Endothelial cell of umbilical vein (primary cell): ENCODE measurements at regions of chr5 and their contacts with region 1.

Region 1: DNA sequence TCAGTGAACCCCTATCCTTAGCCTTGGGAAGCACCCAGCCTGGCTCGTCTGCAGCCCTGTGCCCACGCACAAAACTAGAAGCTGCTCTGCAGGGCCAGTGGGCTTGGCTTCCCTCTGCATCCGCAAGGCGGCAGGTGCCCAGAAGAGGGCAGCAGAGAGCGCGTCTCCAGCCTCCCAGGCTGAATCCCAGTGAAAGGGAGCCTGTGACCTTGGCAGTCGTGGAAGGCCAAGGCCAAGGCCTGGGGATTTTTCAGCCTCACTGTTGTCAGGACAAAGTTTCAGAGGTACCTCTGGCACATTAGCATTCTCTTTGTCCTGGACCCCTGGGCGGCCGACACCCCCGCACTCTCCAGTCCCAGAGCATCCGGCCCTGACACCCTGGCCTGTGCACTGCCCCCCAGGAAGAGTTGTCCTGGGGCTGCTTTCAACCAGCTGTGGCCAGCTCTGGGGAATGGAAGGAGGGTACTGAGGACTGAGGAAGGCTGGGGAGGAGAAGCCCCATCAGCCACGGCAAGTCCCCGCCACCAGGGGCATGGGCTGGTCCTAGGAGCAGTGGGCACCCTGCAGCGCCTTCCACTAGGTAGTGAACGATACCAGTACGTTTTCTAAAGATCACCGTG is 63.6 kb upstream of the IL17B start:
- DNase-seq: peak; percentile 83
- H3K4me3 ChIP-seq: no peak overlapping the region
- H3K27ac ChIP-seq: no peak overlapping the region
- H3K4me1 ChIP-seq: peaks cover 27% of the 10 kb centered on the region
- H3K27me3 ChIP-seq: no peaks in the 10 kb centered on the region
- CTCF ChIP-seq: peak; percentile 93 to 94
- POLR2A ChIP-seq: no peak

Region 2: DNA sequence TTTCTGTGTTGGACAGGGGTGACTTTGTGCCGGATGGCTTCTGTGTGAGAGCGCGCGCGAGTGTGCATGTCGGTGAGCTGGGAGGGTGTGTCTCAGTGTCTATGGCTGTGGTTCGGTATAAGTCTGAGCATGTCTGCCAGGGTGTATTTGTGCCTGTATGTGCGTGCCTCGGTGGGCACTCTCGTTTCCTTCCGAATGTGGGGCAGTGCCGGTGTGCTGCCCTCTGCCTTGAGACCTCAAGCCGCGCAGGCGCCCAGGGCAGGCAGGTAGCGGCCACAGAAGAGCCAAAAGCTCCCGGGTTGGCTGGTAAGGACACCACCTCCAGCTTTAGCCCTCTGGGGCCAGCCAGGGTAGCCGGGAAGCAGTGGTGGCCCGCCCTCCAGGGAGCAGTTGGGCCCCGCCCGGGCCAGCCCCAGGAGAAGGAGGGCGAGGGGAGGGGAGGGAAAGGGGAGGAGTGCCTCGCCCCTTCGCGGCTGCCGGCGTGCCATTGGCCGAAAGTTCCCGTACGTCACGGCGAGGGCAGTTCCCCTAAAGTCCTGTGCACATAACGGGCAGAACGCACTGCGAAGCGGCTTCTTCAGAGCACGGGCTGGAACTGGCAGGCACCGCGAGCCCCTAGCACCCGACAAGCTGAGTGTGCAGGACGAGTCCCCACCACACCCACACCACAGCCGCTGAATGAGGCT is 616.5 kb before region 1 on chr5 and contains the start of gene ADRB2:
- CTCF ChIA-PET with region 1: no interaction called
- POLR2A ChIA-PET with region 1: no interaction called
- dilution Hi-C with region 1: no loop called
- intact Hi-C with region 1: no loop called
- DNase-seq: peak; percentile 94
- H3K4me3 ChIP-seq: peak within 1 kb of the TSS; percentile 15 to 62 (median 49)
- H3K27ac ChIP-seq: peak within 1 kb of the TSS; percentile 42
- H3K4me1 ChIP-seq: peaks cover 34% of the 10 kb centered on the region
- H3K27me3 ChIP-seq: no peaks in the 10 kb centered on the region
- CTCF ChIP-seq: no peak
- POLR2A ChIP-seq: peak; percentile 94
- total RNA-seq, gene ADRB2: 0.60 and 0.86 TPM in 2 replicates

Region 3: GRCh38 chr5:149485655-149486425 is 43.2 kb after region 1 on chr5:
- CTCF ChIA-PET with region 1: interaction called, 10 read pairs
- POLR2A ChIA-PET with region 1: no interaction called
- dilution Hi-C with region 1: no loop called
- intact Hi-C with region 1: loop called (anchors 2 kb)
- DNase-seq: peak; percentile 98
- H3K4me3 ChIP-seq: no peak overlapping the region
- H3K27ac ChIP-seq: peak overlapping the region; percentile 75
- H3K4me1 ChIP-seq: peaks cover 22% of the 10 kb centered on the region
- H3K27me3 ChIP-seq: no peaks in the 10 kb centered on the region
- CTCF ChIP-seq: no peak
- POLR2A ChIP-seq: peak; percentile 1

Region 4: DNA sequence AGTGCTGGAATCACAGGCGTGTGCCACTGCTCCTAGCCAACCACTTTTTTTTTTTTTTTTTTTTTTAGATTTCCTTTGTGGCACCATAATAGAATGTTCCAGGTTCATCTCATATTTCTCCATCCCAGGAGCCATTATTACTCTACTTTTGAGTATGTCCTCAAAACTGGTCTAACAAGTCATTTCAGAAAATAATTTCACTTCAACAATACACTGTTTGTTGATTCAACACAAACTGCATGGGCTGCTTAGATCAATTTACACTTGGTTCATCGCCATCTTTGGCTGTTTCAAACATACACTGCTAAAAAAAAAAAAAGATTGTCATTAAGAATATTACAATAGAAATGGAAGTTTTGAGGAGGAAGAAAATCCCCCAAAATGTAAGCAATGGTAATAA is 50.6 kb after region 1 on chr5:
- CTCF ChIA-PET with region 1: interaction called, 10 read pairs
- POLR2A ChIA-PET with region 1: interaction called, 6 read pairs
- dilution Hi-C with region 1: no loop called
- intact Hi-C with region 1: no loop called
- DNase-seq: no peak
- H3K4me3 ChIP-seq: no peak overlapping the region
- H3K27ac ChIP-seq: no peak overlapping the region
- H3K4me1 ChIP-seq: no peaks in the 10 kb centered on the region
- H3K27me3 ChIP-seq: no peaks in the 10 kb centered on the region
- CTCF ChIP-seq: no peak
- POLR2A ChIP-seq: no peak

Region 5: DNA sequence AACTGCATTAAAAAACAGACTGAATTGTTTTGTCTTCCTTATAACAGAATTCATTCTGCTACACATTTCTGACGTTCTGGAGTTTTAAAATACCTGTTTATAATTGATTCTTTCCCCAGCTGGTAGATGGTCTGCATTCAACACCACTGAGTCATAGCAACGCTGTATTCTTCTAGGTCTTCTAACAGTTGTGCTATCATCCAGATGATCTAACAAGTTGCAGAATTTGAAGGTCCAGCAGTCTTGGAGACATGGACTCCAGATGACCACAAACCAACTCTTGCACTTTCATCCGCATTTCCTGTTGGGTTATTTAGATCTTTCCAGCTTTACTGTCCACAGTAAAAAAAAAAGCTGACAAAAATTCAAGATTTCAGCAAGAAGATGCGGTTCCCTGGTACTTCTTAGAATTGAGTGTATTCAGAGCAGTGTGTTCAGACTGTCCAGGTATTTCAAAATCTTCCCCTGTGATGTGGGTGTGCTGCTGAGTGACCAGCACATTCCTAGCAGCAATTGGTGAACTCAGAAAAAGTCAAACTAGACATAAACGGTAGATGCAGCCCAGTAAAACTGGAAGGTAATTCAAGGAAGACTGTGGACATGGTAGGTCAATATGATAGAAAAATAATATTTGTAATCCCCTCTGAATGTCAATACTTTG is 58.4 kb after region 1 on chr5:
- CTCF ChIA-PET with region 1: interaction called, 24 read pairs
- POLR2A ChIA-PET with region 1: interaction called, 6 read pairs
- dilution Hi-C with region 1: no loop called
- intact Hi-C with region 1: no loop called
- DNase-seq: no peak
- H3K4me3 ChIP-seq: no peak overlapping the region
- H3K27ac ChIP-seq: no peak overlapping the region
- H3K4me1 ChIP-seq: no peaks in the 10 kb centered on the region
- H3K27me3 ChIP-seq: no peaks in the 10 kb centered on the region
- CTCF ChIP-seq: no peak
- POLR2A ChIP-seq: no peak

Region 6: DNA sequence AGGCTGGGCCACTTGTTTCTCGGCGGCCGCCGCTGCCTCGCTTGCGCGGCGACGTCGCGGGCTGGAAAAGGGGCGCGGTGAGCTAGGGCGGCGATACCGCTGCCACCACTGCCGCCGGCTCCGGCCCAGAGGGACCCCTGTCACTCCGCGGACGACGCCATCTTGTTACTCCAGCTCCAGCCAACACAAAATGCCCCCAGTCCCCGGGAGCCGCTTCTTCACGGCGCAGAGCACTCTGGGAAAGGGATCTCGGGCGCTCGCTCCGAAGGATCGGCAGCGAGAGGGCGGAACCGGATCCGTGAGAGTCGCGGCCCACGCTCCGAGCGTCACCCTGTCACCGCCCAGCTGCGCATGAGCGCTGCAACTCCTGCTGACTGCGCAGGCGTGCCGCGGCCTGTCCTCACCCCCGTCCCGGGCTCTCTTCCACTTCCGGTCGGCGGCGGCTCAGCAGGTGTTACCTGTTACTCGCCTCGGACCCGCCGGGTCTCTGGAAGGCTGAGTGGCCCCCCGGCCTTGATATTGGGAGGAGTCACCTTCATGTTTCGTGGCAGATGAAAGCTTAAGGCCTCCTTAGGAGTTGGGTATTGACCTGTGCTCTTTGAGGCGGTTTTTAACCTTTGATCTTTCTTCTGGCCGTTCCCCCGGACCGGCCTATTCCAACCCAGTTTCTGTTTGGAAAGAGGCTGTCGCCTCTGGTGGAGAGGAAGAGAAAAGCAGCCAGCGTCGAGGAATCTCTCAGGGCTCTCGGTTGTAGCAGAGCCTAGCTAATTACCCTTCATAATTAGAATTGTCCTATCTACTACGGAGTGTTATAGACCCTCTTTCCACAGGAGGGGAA is 108.7 kb after region 1 on chr5 and contains the start of gene CSNK1A1:
- CTCF ChIA-PET with region 1: interaction called, 27 read pairs
- POLR2A ChIA-PET with region 1: no interaction called
- dilution Hi-C with region 1: no loop called
- intact Hi-C with region 1: loop called (anchors 1 kb)
- DNase-seq: peak; percentile 99
- H3K4me3 ChIP-seq: peak within 1 kb of the TSS; percentile 81 to 97 (median 85)
- H3K27ac ChIP-seq: peak within 1 kb of the TSS; percentile 91
- H3K4me1 ChIP-seq: peaks cover 31% of the 10 kb centered on the region
- H3K27me3 ChIP-seq: no peaks in the 10 kb centered on the region
- CTCF ChIP-seq: peak; percentile 66 to 71
- POLR2A ChIP-seq: peak; percentile 94
- total RNA-seq, gene CSNK1A1: 253 and 259 TPM in 2 replicates

Region 7: GRCh38 chr5:149567226-149567625 is 124.6 kb after region 1 on chr5:
- CTCF ChIA-PET with region 1: interaction called, 39 read pairs
- POLR2A ChIA-PET with region 1: no interaction called
- dilution Hi-C with region 1: no loop called
- intact Hi-C with region 1: loop called (anchors 1 kb)
- DNase-seq: no peak
- H3K4me3 ChIP-seq: no peak overlapping the region
- H3K27ac ChIP-seq: no peak overlapping the region
- H3K4me1 ChIP-seq: peaks cover 22% of the 10 kb centered on the region
- H3K27me3 ChIP-seq: no peaks in the 10 kb centered on the region
- CTCF ChIP-seq: no peak
- POLR2A ChIP-seq: no peak